Ovary (tissue), 10 donors: ENCODE measurements at regions of chr6 and their contacts with region 1.

Region 1: GRCh38 chr6:168171673-168172353 is 92.8 kb upstream of the FRMD1 start:
- DNase-seq: no peak
- H3K4me3 ChIP-seq: no peak overlapping the region
- H3K27ac ChIP-seq: no peak overlapping the region
- H3K4me1 ChIP-seq: no peaks in the 10 kb centered on the region
- H3K27me3 ChIP-seq: no peaks in the 10 kb centered on the region
- CTCF ChIP-seq: no peak
- EP300 ChIP-seq: no peak
- POLR2A ChIP-seq: no peak

Region 2: GRCh38 chr6:168440520-168441433 is 269.0 kb after region 1 on chr6 and contains the start of gene SMOC2:
- intact Hi-C with region 1: loop called in 1 of 4 experiments (anchors 5 kb)
- DNase-seq: peak; percentile 70 to 83 (median 76)
- H3K4me3 ChIP-seq: peak within 1 kb of the TSS; percentile 69
- H3K27ac ChIP-seq: peak within 1 kb of the TSS; percentile 70 to 81
- H3K4me1 ChIP-seq: peaks cover 15% of the 10 kb centered on the region
- H3K27me3 ChIP-seq: no peaks in the 10 kb centered on the region
- CTCF ChIP-seq: no peak
- EP300 ChIP-seq: no peak
- POLR2A ChIP-seq: no peak
- total RNA-seq, gene SMOC2: 84.4 to 152 (median 123) TPM